Activated CD4-positive, alpha-beta T cell treated with anti-CD3 and anti-CD28 coated beads, Interleukin-2, amount 10 ng/mL, durations not matched to agents 24 days and 14 days (primary cell): ENCODE measurements at regions of chr4 and their contacts with region 1.

Region 1: DNA sequence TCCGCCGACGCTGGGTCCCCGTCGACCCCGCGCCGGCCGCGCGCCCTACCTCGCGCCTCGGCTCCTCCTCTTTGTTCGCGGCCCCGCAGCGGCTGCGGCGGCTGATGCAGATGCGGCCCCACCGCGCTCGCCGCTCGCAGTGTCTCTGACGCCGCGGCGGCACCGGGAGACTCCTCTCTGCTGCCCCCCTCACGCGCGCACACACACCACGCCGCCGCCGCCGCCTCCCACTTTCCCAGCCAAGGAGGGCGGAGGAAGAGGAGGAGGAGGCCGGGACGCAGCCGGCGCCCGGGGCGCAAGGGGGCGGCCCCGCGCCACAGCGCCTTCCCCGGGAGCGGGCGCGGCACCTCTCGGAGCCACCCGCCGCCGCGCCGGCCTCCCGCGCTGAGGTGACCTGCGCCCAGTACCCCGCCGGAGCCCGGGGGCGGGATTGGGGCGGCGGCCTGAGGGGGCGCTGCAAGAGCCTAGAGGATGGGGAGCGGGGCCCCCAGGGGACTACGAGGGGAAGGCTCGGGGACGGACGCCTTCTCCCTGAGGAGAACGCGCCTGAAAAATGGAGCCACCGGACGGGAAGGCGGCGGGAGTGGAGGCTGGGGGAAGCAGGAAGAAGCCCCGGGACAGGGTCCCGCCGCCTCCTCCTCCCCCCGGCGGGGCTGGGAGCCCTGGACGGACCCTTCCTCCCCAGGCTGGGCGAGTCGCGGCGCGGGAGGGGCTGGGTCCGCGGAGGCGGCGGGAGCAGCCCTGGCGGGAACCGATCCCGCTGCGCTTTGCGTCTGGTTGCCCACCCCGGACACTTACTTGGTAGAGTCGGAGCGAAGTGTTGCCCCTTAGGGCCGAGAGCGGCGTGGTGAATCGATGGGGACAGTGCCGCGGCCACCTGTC is at the start of gene SH3RF1:
- DNase-seq: peak; percentile 73
- H3K4me3 Mint-ChIP-seq: peak within 1 kb of the TSS; percentile 83
- H3K27ac Mint-ChIP-seq: no peak within 1 kb of the TSS
- H3K4me1 Mint-ChIP-seq: peaks cover 10% of the 10 kb centered on the region
- H3K27me3 Mint-ChIP-seq: peaks cover 64% of the 10 kb centered on the region
- total RNA-seq, gene SH3RF1: 0.66 and 0.68 TPM in 2 replicates

Region 2: GRCh38 chr4:169225812-169226211 is 45.2 kb before region 1 on chr4:
- intact Hi-C with region 1: loop called (anchors 2 kb)
- DNase-seq: no peak
- H3K4me3 Mint-ChIP-seq: no peak overlapping the region
- H3K27ac Mint-ChIP-seq: no peak overlapping the region
- H3K4me1 Mint-ChIP-seq: no peaks in the 10 kb centered on the region
- H3K27me3 Mint-ChIP-seq: no peaks in the 10 kb centered on the region

Region 3: GRCh38 chr4:169410839-169411770 is 140.1 kb after region 1 on chr4:
- intact Hi-C with region 1: loop called (anchors 5 kb)
- DNase-seq: peak; percentile 89
- H3K4me3 Mint-ChIP-seq: peak overlapping the region; percentile 34
- H3K27ac Mint-ChIP-seq: peak overlapping the region; percentile 60
- H3K4me1 Mint-ChIP-seq: peaks cover 34% of the 10 kb centered on the region
- H3K27me3 Mint-ChIP-seq: no peaks in the 10 kb centered on the region